SK-N-SH (cell line): ENCODE measurements at regions of chr20 and their contacts with region 1.

Region 1: DNA sequence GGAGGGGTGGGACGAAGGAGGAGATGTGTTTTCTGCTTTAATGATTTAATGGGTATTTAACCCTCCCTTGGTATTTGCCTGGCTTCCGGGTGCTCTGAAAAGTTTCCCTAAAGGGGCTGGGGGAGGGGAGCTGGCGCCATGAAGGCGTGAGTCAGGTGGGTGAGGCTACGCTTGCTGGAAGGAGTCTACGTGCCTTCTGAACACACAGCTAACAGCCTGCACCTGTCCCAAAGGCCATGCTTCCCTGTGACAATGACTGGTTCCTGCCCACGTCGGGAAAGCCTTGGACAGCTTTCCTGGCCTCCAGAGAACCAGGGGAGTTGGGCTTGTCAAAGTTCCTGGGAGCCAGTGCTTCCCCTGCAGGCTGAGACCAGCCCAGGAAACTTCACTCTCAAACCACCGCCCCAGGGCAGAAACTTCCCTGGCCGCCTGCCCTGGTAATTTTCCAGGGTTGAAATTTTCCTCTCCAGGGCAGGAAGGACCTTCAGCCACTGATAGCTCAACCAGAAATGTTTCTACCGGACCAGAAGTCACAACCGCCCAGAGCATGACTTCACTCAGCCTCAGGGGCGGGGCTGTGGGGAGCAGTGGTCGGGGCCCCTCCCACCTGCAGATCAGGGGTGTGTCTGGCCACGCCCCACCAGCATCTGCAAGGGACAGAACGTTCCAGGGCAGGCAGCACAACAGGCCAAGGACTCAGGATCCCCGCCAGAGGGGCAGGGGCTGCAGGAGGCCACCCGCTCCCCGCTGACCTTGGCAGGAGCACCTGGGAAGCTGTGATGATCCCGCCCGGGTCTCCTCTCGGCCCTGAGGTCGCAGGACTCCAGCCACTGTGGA is 18.6 kb upstream of the SLCO4A1 start:
- DNase-seq: peak; percentile 93
- H3K4me3 ChIP-seq: no peak overlapping the region
- H3K27ac ChIP-seq: peak overlapping the region in 1 of 2 experiments; percentile 61; a peak in 2 of 4 replicates
- H3K4me1 ChIP-seq: peaks cover 9 to 33% of the 10 kb centered on the region in 2 experiments; a peak in 3 of 4 replicates
- H3K27me3 ChIP-seq: no peaks in the 10 kb centered on the region
- CTCF ChIP-seq: no peak
- EP300 ChIP-seq: no peak
- RAD21 ChIP-seq: no peak

Region 2: GRCh38 chr20:62642040-62642665 is 18.4 kb after region 1 on chr20 and contains the start of gene SLCO4A1:
- CTCF ChIA-PET with region 1: interaction called, 15 read pairs
- POLR2A ChIA-PET with region 1: interaction called, 4 read pairs
- DNase-seq: peak; percentile 98
- H3K4me3 ChIP-seq: peak within 1 kb of the TSS; percentile 35 to 56; a peak in 3 of 4 replicates
- H3K27ac ChIP-seq: peak within 1 kb of the TSS in 1 of 2 experiments; percentile 74; a peak in 1 of 4 replicates
- H3K4me1 ChIP-seq: peaks cover 0 to 64% of the 10 kb centered on the region in 2 experiments; a peak in 2 of 4 replicates
- H3K27me3 ChIP-seq: peaks cover 37% of the 10 kb centered on the region
- CTCF ChIP-seq: no peak
- EP300 ChIP-seq: no peak
- RAD21 ChIP-seq: no peak
- polyA plus RNA-seq, gene SLCO4A1: 0.33 and 0.36 TPM in 2 replicates